Posterior vena cava (tissue), 2 donors: ENCODE measurements at regions of chr11 and their contacts with region 1.

Region 1: DNA sequence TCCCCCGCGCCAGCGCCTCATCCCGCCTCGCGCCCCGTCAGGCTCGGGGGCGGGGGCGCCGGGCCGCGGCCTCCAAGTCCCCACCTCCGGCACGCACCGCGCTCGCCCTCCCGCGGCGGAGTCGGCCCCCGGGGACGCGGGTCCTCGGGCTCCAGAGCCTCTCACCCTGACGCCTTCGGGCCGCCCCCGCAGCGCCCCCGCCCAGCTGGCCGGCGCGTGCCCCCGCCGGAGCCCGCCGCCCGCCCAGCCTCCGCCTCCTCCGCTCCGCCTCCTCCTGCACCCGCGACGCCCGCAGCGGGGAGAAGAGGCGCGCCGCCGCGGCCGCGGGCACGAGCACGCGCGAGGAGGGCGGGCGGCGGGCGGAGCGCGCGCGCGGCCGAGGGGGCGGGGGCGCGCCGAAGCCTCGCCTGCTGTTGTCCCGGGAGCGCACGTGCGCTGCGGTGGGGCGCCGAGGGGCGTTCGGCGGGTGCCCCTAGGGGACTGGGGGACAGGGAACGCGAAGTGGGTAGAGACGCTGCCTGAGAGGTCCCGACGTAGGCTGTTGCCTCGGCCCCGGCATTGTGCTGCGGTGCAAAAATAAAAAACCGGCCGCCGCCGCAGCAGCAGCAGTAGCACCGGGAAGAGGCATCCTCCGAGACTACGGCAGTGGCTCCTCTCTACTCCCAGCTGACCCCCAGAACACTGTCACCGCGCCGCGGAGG is 87.4 kb upstream of the ARHGAP32 start:
- DNase-seq: peak; percentile 90

Region 2: GRCh38 chr11:128399251-128400121 is 880.0 kb before region 1 on chr11:
- intact Hi-C with region 1: loop called in 1 of 2 experiments (anchors 10 kb)
- DNase-seq: no peak

Region 3: GRCh38 chr11:129315781-129316481 is 36.5 kb after region 1 on chr11:
- intact Hi-C with region 1: no loop called
- DNase-seq: no peak

Region 4: DNA sequence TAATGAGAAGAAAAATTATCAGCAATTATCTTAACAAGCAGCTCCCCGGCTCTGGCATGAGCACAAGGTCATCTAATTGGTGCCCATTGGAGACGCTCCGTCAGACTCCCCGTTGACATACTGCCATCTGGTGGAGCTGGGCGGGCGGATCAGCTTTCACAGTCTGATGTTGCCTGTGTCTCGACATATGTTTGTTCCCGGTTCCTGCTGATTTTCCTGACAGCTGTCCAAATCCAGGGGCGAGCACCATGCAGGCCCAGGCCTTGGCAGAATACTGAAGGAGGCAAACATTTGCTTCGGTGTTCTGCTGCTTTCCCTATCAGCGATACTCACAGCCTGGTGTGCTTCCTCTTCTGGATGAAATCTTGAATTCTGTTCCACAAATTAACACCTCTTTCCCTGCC is 52.4 kb after region 1 on chr11:
- intact Hi-C with region 1: loop called in 1 of 2 experiments (anchors 10 kb)
- DNase-seq: peak; percentile 93